OCI-LY7 (cell line): ENCODE measurements at regions of chr2 and their contacts with region 1.

Region 1: GRCh38 chr2:144505245-144505831 is 14.6 kb downstream of the ZEB2 start:
- DNase-seq: no peak
- H3K4me3 ChIP-seq: no peak overlapping the region
- H3K27ac ChIP-seq: no peak overlapping the region
- H3K4me1 ChIP-seq: peaks cover 24% of the 10 kb centered on the region
- CTCF ChIP-seq: no peak

Region 2: DNA sequence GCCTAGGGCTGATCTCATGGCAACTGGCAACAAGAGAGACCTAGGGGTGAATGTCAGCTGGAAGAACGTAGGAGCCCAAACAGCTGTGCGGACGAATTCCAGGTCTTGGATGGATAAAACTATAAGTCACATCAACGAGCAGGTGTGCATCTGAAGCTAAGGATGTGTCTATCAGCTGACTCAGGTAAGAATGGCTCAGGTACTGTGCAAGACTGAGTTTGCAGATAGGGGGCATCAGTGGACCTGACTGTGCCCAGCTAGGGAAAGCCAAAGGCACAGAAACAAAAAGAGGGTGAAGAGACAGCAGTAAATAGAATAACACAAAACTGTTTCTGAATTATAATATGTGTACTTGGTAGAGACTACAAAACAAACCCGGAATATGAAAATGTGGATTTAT is 342.7 kb before region 1 on chr2:
- CTCF ChIA-PET with region 1: no interaction called
- POLR2A ChIA-PET with region 1: no interaction called
- intact Hi-C with region 1: loop called (anchors 5 kb)
- DNase-seq: peak; percentile 65
- H3K4me3 ChIP-seq: no peak overlapping the region
- H3K27ac ChIP-seq: no peak overlapping the region
- H3K4me1 ChIP-seq: no peaks in the 10 kb centered on the region
- CTCF ChIP-seq: peak; percentile 83